Activated CD8-positive, alpha-beta memory T cell treated with anti-CD3 and anti-CD28 coated beads, Interleukin-2, amount 10 ng/mL, durations not matched to agents 7 days and 5 days (primary cell): ENCODE measurements at regions of chr4 and their contacts with region 1.

Region 1: DNA sequence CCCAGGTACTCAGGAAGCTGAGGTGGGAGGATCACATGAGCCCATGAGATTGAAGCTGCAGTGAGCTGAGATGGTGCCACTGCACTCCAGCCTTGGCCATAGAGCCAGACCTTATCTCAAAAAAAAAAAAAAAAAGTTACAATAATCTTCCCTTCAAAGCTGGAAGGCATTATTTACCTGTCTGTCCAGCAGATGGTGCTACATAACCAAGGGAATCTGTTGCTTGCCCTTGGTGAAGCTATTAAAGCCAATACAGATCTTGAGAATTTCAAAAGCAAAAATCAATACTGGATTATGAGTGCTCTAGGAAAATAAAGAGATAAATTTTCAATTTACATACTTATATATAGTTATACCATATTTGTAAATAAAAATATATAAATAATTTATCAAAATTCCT is 25.9 kb downstream of the PKD2 start:
- DNase-seq: peak; percentile 62
- ATAC-seq: peak; percentile 55
- H3K4me3 Mint-ChIP-seq: no peak overlapping the region
- H3K27ac Mint-ChIP-seq: no peak overlapping the region
- H3K4me1 Mint-ChIP-seq: peaks cover under 1% of the 10 kb centered on the region
- H3K27me3 Mint-ChIP-seq: no peaks in the 10 kb centered on the region

Region 2: GRCh38 chr4:88005076-88005475 is 28.2 kb before region 1 on chr4:
- CTCF ChIA-PET with region 1: no interaction called
- DNase-seq: no peak
- ATAC-seq: no peak
- H3K4me3 Mint-ChIP-seq: no peak overlapping the region
- H3K27ac Mint-ChIP-seq: no peak overlapping the region
- H3K4me1 Mint-ChIP-seq: peaks cover 14% of the 10 kb centered on the region
- H3K27me3 Mint-ChIP-seq: peaks cover 36% of the 10 kb centered on the region

Region 3: GRCh38 chr4:88021824-88022223 is 11.5 kb before region 1 on chr4:
- CTCF ChIA-PET with region 1: interaction called, 13 read pairs
- DNase-seq: no peak
- ATAC-seq: no peak
- H3K4me3 Mint-ChIP-seq: no peak overlapping the region
- H3K27ac Mint-ChIP-seq: no peak overlapping the region
- H3K4me1 Mint-ChIP-seq: no peaks in the 10 kb centered on the region
- H3K27me3 Mint-ChIP-seq: no peaks in the 10 kb centered on the region